CD14-positive monocyte (primary cell): ENCODE measurements at regions of chr19 and their contacts with region 1.

Region 1: DNA sequence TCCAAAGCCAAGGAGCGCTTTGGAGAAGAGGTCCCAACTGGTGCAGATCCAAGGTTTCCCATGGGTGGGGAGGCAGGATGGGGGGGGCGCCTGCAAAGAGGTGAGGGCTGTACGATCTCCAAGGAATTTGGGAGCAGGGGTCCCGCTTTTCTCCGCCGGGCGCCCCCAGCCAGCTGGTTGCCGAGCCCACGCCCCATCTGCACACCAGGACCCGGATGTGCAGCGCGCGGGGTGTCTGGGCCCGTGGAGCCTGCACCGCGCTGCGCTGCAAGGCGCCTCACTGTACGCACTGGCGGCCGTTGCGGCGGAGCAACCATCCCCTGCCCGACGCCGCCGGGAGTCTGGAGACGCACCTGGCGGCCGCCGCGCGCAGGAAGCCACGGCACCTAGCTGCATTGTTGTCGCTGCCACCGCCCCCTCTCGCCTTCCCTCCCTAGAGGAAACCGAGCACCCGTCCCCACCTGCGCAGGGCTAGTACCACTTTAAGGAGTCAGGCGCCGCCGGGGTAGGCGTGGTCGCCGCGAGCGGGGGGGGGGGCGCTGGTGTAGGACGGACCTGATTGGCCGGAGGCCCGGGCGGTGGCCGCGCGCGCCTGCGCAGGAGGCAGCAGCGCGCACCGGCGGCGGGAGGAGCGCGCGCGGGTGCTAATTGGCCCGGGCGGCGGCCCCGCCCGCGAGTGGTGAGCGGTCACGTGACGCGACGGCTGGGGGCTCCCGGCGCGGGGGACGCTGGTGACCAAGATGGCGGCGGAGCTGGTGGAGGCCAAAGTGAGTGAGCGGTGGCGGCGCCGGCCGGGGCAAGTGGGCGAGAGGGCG is at the start of gene PIAS4:
- DNase-seq: peak; percentile 92 to 96 (median 95)
- H3K4me3 ChIP-seq: peak within 1 kb of the TSS; percentile 74 to 84 (median 79)
- H3K4me3 Mint-ChIP-seq: peak within 1 kb of the TSS; percentile 84 to 91
- H3K27ac ChIP-seq: peak within 1 kb of the TSS in 1 of 2 donors; percentile 71
- H3K27ac Mint-ChIP-seq: peak within 1 kb of the TSS; percentile 37 to 85 (median 69)
- H3K4me1 ChIP-seq: peaks cover 19 to 32% of the 10 kb centered on the region in 2 donors
- H3K4me1 Mint-ChIP-seq: peaks cover 30% of the 10 kb centered on the region
- H3K27me3 ChIP-seq: no peaks in the 10 kb centered on the region
- H3K27me3 Mint-ChIP-seq: peaks cover 0 to 1% (median 0%) of the 10 kb centered on the region in 3 donors
- CTCF ChIP-seq: no peak
- polyA plus RNA-seq, gene PIAS4: 2.3 to 8.1 (median 5.9) TPM

Region 2: DNA sequence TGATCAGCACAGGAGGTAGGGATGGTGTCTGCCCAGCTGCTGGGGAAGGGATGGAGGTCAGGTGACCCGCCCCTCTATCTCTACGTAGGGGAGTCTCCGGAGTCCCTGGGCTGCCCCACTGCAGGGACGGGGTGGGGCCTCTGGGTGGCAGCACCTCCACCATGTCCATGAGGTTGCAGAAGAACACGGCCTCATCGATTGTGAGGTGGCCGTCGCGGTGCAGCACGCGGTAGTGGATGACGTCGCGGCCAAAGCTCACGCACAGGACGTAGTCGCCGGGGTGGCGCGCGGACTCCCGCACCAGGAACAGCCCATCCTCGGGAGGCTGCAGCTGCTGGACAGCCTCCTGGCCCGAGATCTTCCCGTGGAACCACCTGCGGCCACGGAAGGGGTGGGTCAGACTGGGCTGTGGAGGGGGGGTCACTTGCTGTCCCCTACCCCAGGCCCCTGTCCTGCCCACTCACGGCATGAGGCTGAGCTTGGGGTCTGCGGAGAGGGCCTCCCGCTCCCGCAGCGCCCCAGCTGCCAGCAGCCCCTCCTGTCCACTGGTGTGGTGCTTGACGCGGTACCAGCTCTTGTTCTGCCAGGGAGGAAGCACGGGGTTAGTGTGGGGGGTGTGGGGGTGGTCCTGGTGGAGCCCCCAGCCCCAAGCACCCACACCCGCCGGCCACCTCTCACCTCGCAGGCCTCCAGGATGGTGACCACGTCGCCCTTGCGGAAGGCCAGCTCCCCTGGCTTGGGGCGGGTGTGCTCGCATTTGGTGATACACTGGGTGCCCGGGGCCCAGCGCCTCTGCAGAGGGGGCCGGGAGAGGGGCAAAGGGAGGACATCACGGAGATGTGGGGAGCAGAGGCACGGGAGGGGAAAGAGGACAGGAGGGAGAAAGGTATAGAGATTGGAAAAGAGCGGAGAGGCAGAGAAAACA is 223.3 kb before region 1 on chr19:
- intact Hi-C with region 1: no loop called
- DNase-seq: no peak
- H3K4me3 ChIP-seq: no peak overlapping the region
- H3K4me3 Mint-ChIP-seq: no peak overlapping the region
- H3K27ac ChIP-seq: no peak overlapping the region
- H3K27ac Mint-ChIP-seq: peak overlapping the region in 1 of 7 donors; percentile 52
- H3K4me1 ChIP-seq: peaks cover 7 to 15% of the 10 kb centered on the region in 2 donors
- H3K4me1 Mint-ChIP-seq: peaks cover 9% of the 10 kb centered on the region
- H3K27me3 ChIP-seq: peaks cover 0 to 13% of the 10 kb centered on the region in 2 donors
- H3K27me3 Mint-ChIP-seq: peaks cover 16 to 27% (median 17%) of the 10 kb centered on the region in 3 donors
- CTCF ChIP-seq: peak; percentile 16

Region 3: GRCh38 chr19:3932931-3933810 is 74.1 kb before region 1 on chr19 and contains the start of gene NMRK2:
- intact Hi-C with region 1: no loop called
- DNase-seq: no peak
- H3K4me3 ChIP-seq: no peak within 1 kb of the TSS
- H3K4me3 Mint-ChIP-seq: peak within 1 kb of the TSS in 1 of 2 donors; percentile 64
- H3K27ac ChIP-seq: no peak within 1 kb of the TSS
- H3K27ac Mint-ChIP-seq: no peak within 1 kb of the TSS
- H3K4me1 ChIP-seq: no peaks in the 10 kb centered on the region
- H3K4me1 Mint-ChIP-seq: no peaks in the 10 kb centered on the region
- H3K27me3 ChIP-seq: peaks cover 7 to 32% of the 10 kb centered on the region in 2 donors
- H3K27me3 Mint-ChIP-seq: peaks cover 34 to 56% (median 42%) of the 10 kb centered on the region in 3 donors
- CTCF ChIP-seq: no peak
- polyA plus RNA-seq, gene NMRK2: not detected

Region 4: GRCh38 chr19:3950871-3951861 is 56.1 kb before region 1 on chr19:
- intact Hi-C with region 1: no loop called
- DNase-seq: peak in 1 of 3 donors; percentile 16
- H3K4me3 ChIP-seq: peak overlapping the region; percentile 32 to 77 (median 53)
- H3K4me3 Mint-ChIP-seq: peak overlapping the region; percentile 88 to 93
- H3K27ac ChIP-seq: no peak overlapping the region
- H3K27ac Mint-ChIP-seq: peak overlapping the region in 4 of 7 donors; percentile 32 to 47 (median 42)
- H3K4me1 ChIP-seq: peaks cover 0 to 16% of the 10 kb centered on the region in 2 donors
- H3K4me1 Mint-ChIP-seq: peaks cover 21% of the 10 kb centered on the region
- H3K27me3 ChIP-seq: no peaks in the 10 kb centered on the region
- H3K27me3 Mint-ChIP-seq: peaks cover 4 to 13% (median 9%) of the 10 kb centered on the region in 3 donors
- CTCF ChIP-seq: no peak

Region 5: DNA sequence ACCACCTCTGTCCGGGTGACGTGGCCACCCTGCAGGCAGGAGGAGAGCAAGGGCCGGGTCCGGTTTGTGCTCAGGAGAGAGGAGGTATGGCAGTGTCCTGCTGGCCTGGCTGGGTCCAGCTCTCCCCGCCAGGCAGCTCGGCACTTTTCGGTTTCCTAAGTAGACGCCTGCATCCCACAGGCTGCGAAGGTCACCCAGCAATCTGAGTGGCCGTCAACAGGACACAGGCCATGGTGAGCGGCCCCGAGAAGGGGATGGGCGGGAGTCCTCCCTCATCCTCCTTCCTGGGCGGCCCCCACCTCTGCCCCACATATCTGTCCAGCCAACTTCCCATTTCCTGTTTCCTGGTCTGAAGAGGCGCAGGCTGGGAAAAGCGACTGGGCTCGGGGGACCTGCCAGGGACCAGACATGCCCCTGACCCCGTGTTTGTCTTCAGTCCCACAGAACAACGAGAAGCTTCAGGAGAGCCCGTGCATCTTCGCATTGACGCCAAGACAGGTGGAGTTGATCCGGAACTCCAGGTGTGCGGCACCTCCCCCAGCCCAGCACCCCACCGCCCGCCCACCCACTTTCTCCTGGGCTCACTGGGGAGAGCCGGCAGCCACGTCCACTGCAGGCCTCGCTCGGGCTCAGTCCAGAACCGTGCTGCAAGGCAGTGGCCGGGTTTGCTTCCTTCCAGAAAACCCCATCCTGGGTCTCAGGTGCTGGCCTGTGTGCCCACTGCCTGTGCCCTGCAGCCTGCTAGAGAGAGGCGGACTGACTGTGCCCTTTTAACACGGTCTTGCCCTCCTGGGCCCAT is 16.6 kb after region 1 on chr19:
- intact Hi-C with region 1: no loop called
- DNase-seq: no peak
- H3K4me3 ChIP-seq: no peak overlapping the region
- H3K4me3 Mint-ChIP-seq: no peak overlapping the region
- H3K27ac ChIP-seq: no peak overlapping the region
- H3K27ac Mint-ChIP-seq: peak overlapping the region in 1 of 7 donors; percentile 30
- H3K4me1 ChIP-seq: no peaks in the 10 kb centered on the region
- H3K4me1 Mint-ChIP-seq: no peaks in the 10 kb centered on the region
- H3K27me3 ChIP-seq: no peaks in the 10 kb centered on the region
- H3K27me3 Mint-ChIP-seq: peaks cover 0 to 1% (median 0%) of the 10 kb centered on the region in 3 donors
- CTCF ChIP-seq: no peak

Region 6: DNA sequence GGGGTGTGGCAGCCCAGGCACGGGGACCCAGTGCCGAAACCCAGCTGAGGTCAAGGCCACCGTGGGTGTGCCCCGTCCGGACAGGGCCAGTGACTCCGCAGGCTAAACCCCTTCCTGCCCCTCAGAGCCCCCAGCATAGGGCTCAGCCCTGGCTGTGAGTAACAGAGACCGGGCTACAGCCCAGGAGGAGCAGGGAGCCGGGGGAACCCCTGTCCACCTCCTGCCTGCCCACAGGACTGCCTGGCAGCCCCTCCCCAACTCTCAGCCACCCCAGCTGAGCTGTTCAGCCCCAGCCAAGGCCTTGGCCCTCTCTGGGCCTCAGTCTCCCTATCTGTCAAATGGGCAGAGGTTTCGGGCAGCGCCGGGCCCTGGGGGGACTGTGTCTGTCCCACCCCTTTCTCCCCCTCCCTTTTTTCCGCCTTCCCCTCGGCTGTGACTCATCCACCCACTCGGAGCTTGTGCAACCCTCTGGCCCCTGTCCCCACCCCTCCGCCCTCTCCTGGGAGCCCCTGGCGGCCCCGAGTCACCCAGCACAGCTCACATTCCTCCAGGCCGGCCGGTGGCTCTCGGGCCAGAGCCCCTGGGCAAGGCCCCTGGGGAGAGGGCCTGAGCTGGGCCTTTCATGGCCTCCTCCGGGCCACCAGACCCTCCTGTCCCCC is 50.9 kb after region 1 on chr19:
- intact Hi-C with region 1: loop called (anchors 2 to 5 kb)
- DNase-seq: peak; percentile 94 to 98 (median 95)
- H3K4me3 ChIP-seq: peak overlapping the region; percentile 13 to 93 (median 40)
- H3K4me3 Mint-ChIP-seq: peak overlapping the region; percentile 77
- H3K27ac ChIP-seq: peak overlapping the region; percentile 97
- H3K27ac Mint-ChIP-seq: peak overlapping the region; percentile 96 to 100 (median 99)
- H3K4me1 ChIP-seq: peaks cover 77 to 92% of the 10 kb centered on the region in 2 donors
- H3K4me1 Mint-ChIP-seq: peaks cover 65% of the 10 kb centered on the region
- H3K27me3 ChIP-seq: no peaks in the 10 kb centered on the region
- H3K27me3 Mint-ChIP-seq: peaks cover 0 to 4% (median 1%) of the 10 kb centered on the region in 3 donors
- CTCF ChIP-seq: peak; percentile 46

Region 7: DNA sequence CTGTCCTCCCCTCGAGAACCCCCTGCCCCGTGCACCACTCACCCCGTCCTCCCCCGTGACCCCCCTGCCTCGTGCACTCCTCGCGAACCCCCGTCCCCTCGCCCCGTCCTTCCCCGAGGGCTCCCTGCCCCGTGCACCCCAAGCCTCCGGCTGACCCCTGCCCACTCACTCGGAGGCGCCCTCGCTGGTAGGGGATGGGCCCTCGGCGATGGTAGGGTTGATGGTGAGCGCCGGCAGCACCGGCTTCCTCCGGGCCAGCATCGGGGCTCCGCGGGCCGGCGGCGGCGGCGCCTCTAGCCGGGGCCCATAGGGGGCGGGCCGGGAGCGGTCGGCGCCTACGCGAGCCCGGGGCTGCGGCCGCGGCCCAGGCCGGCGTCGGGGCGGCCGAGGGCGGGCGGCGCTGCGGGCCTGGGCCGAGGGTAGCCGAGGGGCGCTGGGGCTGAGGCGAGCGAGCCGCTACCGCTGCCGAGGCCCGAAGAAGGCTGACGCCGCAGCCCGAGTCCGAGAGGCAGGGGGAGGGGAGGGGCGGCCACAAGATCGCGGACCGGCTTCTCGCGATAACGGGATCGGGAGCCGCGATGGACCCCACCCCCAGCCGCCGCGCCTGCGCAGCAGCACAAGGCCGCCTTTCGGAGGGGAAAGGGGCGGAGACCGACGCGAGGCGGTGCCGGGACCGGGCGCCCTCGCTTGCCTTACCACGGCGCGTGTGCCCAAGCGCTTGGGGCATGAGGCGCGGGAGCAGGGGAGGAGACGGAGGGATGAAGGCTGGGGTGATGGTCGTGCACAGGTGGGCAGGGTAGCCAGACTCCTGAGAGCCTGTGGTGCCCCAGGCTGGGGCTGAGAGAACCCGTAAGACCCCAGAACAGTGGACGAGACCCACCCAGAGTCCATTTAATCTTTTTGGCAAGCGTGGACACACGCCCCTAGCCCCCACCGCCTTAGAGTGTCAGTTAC is 116.7 kb after region 1 on chr19 and contains the start of gene MAP2K2:
- intact Hi-C with region 1: loop called in 1 of 2 experiments (anchors 10 kb)
- DNase-seq: peak; percentile 91 to 94 (median 93)
- H3K4me3 ChIP-seq: peak within 1 kb of the TSS; percentile 59 to 95 (median 81)
- H3K4me3 Mint-ChIP-seq: peak within 1 kb of the TSS; percentile 89 to 90
- H3K27ac ChIP-seq: peak within 1 kb of the TSS in 1 of 2 donors; percentile 75
- H3K27ac Mint-ChIP-seq: peak within 1 kb of the TSS in 6 of 7 donors; percentile 60 to 94 (median 86)
- H3K4me1 ChIP-seq: peaks cover 17 to 19% of the 10 kb centered on the region in 2 donors
- H3K4me1 Mint-ChIP-seq: peaks cover 17% of the 10 kb centered on the region
- H3K27me3 ChIP-seq: no peaks in the 10 kb centered on the region
- H3K27me3 Mint-ChIP-seq: peaks cover 0 to 3% (median 0%) of the 10 kb centered on the region in 3 donors
- CTCF ChIP-seq: no peak
- polyA plus RNA-seq, gene MAP2K2: 30.5 to 94.5 (median 40.2) TPM